ENCODE measurements at regions of chr17 and their contacts with region 1.

Region 1: DNA sequence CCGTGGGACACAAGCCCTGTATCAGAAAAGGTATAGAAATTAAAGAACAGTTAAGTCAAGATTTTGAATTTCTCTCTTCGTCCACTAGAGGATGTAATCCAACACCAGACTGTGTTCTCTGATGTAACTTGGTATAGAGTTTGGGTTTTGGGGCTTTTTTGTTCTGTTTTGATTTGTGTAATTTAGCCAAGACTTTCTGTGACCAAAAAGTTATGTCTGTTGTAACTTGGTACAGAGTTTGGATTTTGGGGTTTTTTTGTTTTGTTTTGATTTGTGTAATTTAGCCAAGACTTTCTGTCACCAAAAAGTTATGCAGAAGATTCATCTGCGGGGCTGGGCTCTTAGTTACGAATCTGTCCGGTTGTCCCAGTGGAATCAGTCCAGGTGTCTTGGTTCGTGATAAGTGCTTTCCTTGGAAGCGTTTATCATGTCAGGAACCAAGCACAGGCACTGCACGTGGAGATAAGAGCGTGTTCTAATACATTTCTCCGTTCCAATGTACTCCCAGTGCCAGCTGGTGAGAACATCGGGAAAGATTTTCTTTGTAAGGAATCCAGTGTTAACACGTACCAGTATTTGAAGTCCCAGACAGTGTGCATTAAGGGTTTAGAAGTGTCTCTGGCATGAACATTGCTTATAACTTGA is 44.1 kb upstream of the SEC14L1 start:
- DNase-seq: no peak

Region 2: DNA sequence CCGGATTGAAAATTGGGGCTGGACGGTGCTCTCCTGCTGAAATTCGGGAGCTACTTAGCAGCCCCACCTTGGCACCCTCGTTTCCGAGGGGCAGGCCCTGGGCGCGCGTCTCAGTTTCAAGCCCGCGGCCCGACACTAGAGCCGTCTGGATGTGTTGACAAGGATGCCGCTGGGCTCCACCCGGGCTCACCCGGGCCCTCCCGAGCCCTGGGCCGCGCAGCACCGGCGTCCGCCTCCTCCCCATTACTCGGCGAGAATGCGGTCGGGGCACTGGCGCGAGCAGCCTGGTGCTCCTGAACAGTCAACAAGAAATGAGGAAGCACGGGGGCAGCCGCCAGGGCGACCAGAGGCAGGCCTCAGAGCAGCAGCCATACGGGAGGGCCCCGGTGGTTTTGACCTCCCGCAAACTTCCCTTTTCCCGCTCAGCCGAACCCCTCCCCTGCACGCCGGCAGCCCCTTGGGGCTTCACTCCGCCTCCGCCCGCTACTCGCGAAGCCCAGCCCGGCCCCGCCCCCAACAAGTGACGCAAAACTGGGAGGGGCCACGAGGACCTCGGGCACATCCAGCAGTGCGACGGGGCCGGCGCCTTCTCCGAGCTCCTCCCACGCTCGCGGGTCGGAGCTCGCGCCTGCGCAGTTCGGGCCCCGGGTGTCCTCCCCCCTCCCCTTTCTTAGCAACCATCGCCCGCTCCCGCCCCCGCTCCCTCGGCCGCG is 43.6 kb after region 1 on chr17:
- intact Hi-C with region 1: loop called (anchors 10 kb)
- DNase-seq: peak; percentile 100